Psoas muscle (tissue), 8 donors: ENCODE measurements at regions of chr6 and their contacts with region 1.

Region 1: GRCh38 chr6:4055420-4056041 is 23.4 kb downstream of the FAM217A start:
- DNase-seq: no peak
- ATAC-seq: peak; percentile 82 to 97 (median 94)
- H3K4me3 ChIP-seq: no peak overlapping the region
- H3K27ac ChIP-seq: peak overlapping the region; percentile 58
- H3K4me1 ChIP-seq: peaks cover 12% of the 10 kb centered on the region
- H3K27me3 ChIP-seq: no peaks in the 10 kb centered on the region
- CTCF ChIP-seq: peak; percentile 61

Region 2: DNA sequence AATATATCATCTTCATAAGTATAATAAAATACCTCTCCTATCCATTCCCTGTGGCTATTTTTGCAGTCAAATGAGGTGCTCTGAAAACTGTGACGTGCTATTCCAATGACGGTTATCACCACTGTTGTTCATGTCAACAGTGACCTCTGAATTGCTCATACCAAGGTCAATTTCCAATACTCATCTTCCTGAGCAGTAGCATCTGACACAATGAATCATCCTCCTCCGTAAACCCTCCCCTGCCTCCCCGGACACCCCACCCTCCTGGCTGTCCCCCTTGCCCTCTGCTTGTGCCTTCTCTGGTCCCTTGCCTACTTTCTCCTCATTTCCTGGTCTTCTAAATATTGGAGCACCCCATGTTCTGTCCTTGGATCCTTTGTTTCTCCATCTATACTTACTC is 520.9 kb before region 1 on chr6:
- intact Hi-C with region 1: no loop called
- DNase-seq: no peak
- ATAC-seq: no peak
- H3K4me3 ChIP-seq: no peak overlapping the region
- H3K27ac ChIP-seq: no peak overlapping the region
- H3K4me1 ChIP-seq: no peaks in the 10 kb centered on the region
- H3K27me3 ChIP-seq: no peaks in the 10 kb centered on the region
- CTCF ChIP-seq: no peak

Region 3: DNA sequence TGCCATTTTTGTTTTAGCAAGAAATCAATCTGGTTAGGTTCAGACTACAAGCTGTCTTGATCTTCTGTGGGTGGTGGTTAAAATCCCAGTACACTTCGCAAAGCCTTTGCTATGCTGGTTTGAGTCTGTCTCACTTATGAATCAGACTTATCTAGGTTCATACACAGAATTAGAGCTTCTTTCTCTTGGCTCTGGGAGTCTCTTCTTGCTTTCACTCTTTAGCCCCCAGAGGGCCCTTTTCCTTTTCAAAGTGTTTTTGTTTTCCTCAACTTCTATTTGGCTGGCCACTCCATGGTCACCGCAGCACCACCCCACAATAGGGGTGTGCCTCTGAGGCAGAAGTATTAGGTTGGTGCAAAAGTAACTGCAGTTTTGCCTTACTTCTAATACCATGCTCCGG is 58.6 kb after region 1 on chr6:
- intact Hi-C with region 1: loop called (anchors 5 kb)
- DNase-seq: no peak
- ATAC-seq: no peak
- H3K4me3 ChIP-seq: no peak overlapping the region
- H3K27ac ChIP-seq: peak overlapping the region; percentile 36
- H3K4me1 ChIP-seq: peaks cover 28% of the 10 kb centered on the region
- H3K27me3 ChIP-seq: no peaks in the 10 kb centered on the region
- CTCF ChIP-seq: no peak

Region 4: DNA sequence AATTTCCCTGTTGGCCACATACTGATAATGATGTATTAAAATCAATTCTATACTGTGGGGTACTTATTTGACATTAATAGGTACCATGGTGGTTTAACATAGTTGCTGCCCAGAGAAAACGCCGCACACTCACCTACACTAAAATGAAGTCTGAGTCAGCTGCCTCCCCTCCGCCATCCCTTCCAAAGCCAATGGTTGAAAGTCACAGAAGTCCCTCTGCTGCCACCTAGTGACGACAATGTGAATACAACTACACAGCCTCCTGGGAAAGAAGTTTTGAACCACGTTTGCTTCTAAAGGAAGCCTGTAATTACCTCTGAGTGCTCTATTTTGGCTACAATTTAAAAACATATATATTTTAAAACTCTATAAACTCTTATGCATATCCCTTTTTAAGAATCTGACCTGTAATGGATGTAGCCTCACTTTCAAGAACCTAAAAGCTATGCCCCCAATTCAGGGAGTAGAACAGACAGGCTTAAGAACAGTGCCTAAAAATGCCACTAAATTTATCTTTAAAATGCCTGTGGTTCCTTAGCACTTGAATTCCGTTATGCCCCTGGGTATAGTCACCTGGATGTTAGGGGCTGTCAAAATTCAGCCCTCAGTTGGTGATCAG is 100.4 kb after region 1 on chr6:
- intact Hi-C with region 1: loop called (anchors 2 kb)
- DNase-seq: peak; percentile 58 to 72
- ATAC-seq: peak; percentile 91 to 97 (median 96)
- H3K4me3 ChIP-seq: no peak overlapping the region
- H3K27ac ChIP-seq: no peak overlapping the region
- H3K4me1 ChIP-seq: peaks cover 5% of the 10 kb centered on the region
- H3K27me3 ChIP-seq: no peaks in the 10 kb centered on the region
- CTCF ChIP-seq: peak; percentile 90